ENCODE measurements at regions of chr2 and their contacts with region 1.

Region 1: DNA sequence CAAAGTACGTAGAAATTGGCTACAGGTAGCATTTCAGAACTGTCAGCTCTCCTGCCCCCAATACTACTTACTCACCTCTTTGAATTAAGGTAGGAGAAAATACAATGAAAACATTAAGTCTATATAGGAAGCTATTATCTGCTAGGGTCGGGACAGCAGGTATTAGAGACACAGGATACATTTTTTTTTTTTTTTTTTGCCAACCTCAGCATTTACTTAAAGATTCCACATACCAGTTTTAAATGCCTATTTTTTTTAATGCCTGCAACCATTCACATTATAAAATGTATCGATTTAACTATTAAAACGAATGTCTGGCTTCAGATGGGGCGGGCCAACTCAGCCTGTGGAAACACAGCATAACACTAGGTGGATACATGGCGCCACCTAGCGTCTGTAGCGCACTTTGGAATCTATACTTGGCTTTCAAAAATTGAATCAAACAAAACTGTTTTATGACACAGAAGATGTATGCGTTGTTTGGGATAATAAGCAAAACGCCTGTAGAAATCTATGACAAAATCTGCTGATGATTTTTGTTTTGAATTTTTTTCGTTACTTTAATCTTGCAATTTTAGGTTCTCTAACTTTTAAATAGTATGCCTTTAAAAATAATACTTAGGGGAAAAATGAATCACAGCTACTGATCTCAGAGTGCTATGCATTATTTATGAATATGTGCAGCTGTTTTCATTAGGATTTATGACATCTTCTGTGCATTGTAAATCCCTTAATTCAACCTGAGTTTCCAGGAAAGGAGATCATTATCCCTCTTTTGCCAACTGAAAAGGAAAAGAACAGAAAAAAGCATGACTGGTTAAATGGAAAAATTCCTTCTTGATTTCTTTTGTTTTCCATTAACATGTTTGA is 261.0 kb downstream of the NYAP2 start:
- DNase-seq: peak; percentile 55
- H3K4me3 ChIP-seq: no peak overlapping the region
- H3K27ac ChIP-seq: no peak overlapping the region
- H3K4me1 ChIP-seq: no peaks in the 10 kb centered on the region
- H3K27me3 ChIP-seq: peaks cover 0 to 2% of the 10 kb centered on the region in 2 experiments
- CTCF ChIP-seq: peak; percentile 81 to 82
- POLR2A ChIP-seq: no peak

Region 2: GRCh38 chr2:224650815-224651439 is 1009.6 kb before region 1 on chr2:
- CTCF ChIA-PET with region 1: interaction called, 4 read pairs
- POLR2A ChIA-PET with region 1: no interaction called
- dilution Hi-C with region 1: no loop called
- intact Hi-C with region 1: loop called (anchors 2 kb)
- DNase-seq: peak; percentile 61
- H3K4me3 ChIP-seq: no peak overlapping the region
- H3K27ac ChIP-seq: no peak overlapping the region
- H3K4me1 ChIP-seq: no peaks in the 10 kb centered on the region
- H3K27me3 ChIP-seq: no peaks in the 10 kb centered on the region
- CTCF ChIP-seq: peak; percentile 49 to 60
- POLR2A ChIP-seq: no peak

Region 3: DNA sequence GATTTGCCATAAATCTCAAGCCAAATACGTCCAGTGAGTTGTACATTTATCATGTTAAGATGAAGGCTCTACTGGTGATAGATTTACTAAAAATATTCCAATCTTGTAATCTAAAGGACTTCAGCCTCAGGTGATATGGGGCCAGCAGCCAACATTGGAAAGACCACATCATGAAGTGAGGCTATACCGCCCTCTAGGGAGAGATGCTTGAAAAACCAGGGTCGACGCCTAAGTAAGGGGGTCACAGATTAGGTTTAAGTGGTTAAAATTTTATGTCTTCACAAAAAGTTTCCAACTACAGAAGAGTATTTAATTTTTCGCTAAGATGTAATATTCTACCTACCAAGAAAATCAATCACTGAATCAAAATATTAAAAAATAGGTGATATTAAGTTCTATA is 651.6 kb before region 1 on chr2:
- CTCF ChIA-PET with region 1: interaction called, 7 read pairs
- POLR2A ChIA-PET with region 1: no interaction called
- dilution Hi-C with region 1: no loop called
- intact Hi-C with region 1: loop called (anchors 2 kb)
- DNase-seq: peak; percentile 39
- H3K4me3 ChIP-seq: no peak overlapping the region
- H3K27ac ChIP-seq: no peak overlapping the region
- H3K4me1 ChIP-seq: peaks cover 13% of the 10 kb centered on the region
- H3K27me3 ChIP-seq: no peaks in the 10 kb centered on the region
- CTCF ChIP-seq: peak; percentile 37 to 63
- POLR2A ChIP-seq: no peak

Region 4: DNA sequence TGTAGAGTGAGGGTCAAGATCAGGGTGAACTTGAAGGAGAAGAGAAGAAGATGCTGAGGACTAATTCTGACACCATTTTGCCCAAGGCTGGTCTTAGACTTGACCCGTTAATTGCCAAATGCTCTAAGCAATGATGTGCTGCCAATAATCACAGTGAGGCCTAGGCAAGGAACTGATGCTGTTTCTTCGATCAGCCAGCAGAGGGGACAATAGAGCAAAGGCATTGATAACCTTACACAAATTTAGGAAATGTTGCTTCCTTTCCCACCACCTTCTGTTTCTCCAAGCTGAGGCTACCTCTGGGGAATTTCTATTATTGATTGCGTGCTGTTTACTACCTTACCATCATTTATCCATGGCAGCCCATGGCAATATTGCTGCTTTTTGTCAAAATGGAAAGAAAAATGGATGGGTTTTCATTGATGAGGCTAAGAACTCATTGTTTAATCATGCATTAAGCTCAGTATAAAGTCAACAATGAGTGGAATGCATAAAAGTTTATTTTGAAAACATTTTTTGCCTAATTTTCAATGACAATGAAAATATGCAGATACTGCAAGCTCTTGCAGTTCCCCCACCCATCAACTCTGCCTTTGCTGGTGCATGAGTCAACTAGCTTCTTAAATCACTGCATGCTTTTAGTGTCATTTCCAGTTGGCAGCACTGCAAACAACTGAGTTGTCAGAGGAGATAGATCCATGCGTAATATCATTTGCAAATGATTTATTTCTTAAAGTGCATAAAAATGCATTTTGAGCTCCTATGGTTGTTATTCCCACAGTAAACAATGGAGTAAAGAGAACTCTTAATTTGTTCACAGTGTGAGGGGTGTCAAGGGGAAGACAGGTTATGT is 377.4 kb before region 1 on chr2:
- CTCF ChIA-PET with region 1: interaction called, 57 read pairs
- POLR2A ChIA-PET with region 1: no interaction called
- dilution Hi-C with region 1: no loop called
- intact Hi-C with region 1: loop called (anchors 1 kb)
- DNase-seq: peak; percentile 1
- H3K4me3 ChIP-seq: no peak overlapping the region
- H3K27ac ChIP-seq: no peak overlapping the region
- H3K4me1 ChIP-seq: no peaks in the 10 kb centered on the region
- H3K27me3 ChIP-seq: no peaks in the 10 kb centered on the region
- CTCF ChIP-seq: peak; percentile 37 to 40
- POLR2A ChIP-seq: no peak

Region 5: GRCh38 chr2:225678792-225679191 is 18.3 kb after region 1 on chr2:
- CTCF ChIA-PET with region 1: interaction called, 12 read pairs
- POLR2A ChIA-PET with region 1: no interaction called
- dilution Hi-C with region 1: no loop called
- intact Hi-C with region 1: no loop called
- DNase-seq: no peak
- H3K4me3 ChIP-seq: no peak overlapping the region
- H3K27ac ChIP-seq: no peak overlapping the region
- H3K4me1 ChIP-seq: no peaks in the 10 kb centered on the region
- H3K27me3 ChIP-seq: no peaks in the 10 kb centered on the region
- CTCF ChIP-seq: no peak
- POLR2A ChIP-seq: no peak

Region 6: DNA sequence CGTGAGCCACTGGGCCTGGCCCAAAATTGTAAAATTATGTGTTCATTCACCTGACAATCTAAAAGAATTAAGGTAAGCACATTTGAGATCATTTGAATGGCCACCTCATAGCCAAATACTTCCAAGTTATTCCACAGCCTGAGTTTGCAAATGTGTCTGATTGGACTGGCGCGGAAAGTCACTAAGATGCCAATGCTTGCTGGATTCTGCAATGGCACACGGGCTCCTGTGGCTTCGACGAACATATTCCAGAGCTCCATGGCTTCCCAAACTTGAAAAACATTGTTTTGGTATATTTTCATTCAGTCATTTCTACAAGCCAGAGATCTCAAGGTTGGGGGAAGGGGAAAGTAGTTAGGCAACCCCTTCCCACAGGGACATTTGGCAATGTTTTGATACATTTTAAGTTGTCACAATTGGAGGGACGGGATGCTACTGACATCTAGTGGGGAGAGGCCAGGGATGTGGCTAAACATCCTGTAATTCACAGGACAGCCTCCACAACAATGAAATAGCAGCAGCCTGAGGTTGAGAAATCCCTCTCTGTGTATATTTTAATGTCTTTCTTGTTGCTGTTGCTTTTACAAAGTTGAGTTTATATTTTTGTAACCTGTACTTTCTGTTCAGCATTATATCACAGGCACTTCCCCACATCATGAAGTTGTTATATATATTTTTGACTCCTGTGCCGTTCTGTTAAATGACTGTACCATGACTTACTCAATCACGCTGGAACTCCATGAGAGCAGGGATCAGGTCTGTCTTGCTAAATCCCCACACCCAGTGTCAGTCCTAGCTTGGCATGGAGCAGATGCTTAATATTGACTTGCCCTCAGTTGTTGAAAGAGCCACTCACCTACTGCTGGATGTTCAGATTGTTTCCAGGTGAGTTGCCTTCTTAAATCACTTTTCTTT is 1446.6 kb after region 1 on chr2:
- CTCF ChIA-PET with region 1: interaction called, 28 read pairs
- POLR2A ChIA-PET with region 1: no interaction called
- dilution Hi-C with region 1: no loop called
- intact Hi-C with region 1: no loop called
- DNase-seq: peak; percentile 32
- H3K4me3 ChIP-seq: no peak overlapping the region
- H3K27ac ChIP-seq: no peak overlapping the region
- H3K4me1 ChIP-seq: no peaks in the 10 kb centered on the region
- H3K27me3 ChIP-seq: no peaks in the 10 kb centered on the region
- CTCF ChIP-seq: peak; percentile 26 to 34
- POLR2A ChIP-seq: no peak